CD8-positive, alpha-beta memory T cell (primary cell): ENCODE measurements at regions of chr16 and their contacts with region 1.

Region 1: DNA sequence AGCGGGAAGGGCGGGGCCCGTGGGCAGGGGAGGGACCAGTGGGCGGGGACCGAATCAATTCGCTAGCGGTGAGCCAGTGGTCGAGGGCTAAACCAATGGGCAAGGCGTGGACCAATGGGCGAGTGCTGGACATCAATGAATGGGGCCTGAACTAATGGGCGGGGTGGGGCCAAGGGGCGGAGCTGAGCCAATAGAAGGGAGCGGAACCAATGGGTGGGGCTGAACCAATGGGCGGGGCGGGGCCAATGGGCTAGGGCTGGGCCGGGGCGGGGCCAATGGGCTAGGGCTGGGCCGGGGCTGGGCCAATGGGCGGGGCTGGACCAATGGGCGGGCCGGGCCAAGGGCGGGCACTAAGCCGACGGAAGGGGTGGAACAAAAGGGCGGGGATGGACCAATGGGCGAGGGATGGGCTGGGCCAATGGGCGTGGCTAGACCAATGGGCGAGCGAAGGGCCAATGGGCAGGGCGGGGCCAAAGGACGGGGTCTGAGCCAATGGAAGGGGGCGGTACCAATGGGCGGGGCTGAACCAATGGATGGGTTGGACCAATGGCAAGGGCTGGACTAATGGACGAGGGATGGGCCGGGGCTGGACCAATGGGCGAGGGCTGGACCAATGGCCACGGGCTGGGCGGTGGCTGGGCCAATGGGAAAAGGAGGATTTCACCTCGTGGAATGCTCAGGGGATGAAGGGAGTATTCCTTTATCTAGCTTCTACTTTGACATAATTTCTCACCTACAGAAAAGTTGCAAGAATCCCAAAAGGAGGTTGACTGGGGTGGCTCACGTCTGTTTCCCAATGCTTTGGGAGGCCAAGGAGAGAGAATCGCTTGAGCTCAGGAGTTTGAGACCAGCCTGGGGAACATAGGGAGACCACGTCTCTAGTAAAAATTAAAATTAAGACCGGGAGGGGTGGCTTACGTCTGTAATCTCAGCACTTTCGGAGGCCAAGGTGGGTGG is 6.0 kb upstream of the FLYWCH1 start:
- DNase-seq: peak; percentile 84 to 89 (median 89)
- H3K4me3 ChIP-seq: peak overlapping the region; percentile 73
- H3K4me3 Mint-ChIP-seq: peak overlapping the region; percentile 88 to 96 (median 92)
- H3K27ac ChIP-seq: peak overlapping the region; percentile 74
- H3K27ac Mint-ChIP-seq: peak overlapping the region in 7 of 8 donors; percentile 72 to 88 (median 87)
- H3K4me1 ChIP-seq: peaks cover 10% of the 10 kb centered on the region
- H3K4me1 Mint-ChIP-seq: peaks cover 23 to 31% (median 26%) of the 10 kb centered on the region in 3 donors
- H3K27me3 ChIP-seq: no peaks in the 10 kb centered on the region
- H3K27me3 Mint-ChIP-seq: peaks cover 0 to 2% of the 10 kb centered on the region in 2 donors

Region 2: GRCh38 chr16:2703241-2703745 is 202.4 kb before region 1 on chr16:
- CTCF ChIA-PET with region 1: no interaction called
- POLR2A ChIA-PET with region 1: no interaction called
- DNase-seq: no peak
- H3K4me3 ChIP-seq: no peak overlapping the region
- H3K4me3 Mint-ChIP-seq: no peak overlapping the region
- H3K27ac ChIP-seq: no peak overlapping the region
- H3K27ac Mint-ChIP-seq: no peak overlapping the region
- H3K4me1 ChIP-seq: no peaks in the 10 kb centered on the region
- H3K4me1 Mint-ChIP-seq: no peaks in the 10 kb centered on the region
- H3K27me3 ChIP-seq: no peaks in the 10 kb centered on the region
- H3K27me3 Mint-ChIP-seq: no peaks in the 10 kb centered on the region

Region 3: GRCh38 chr16:2874912-2875362 is 30.8 kb before region 1 on chr16:
- CTCF ChIA-PET with region 1: interaction called, 10 read pairs
- POLR2A ChIA-PET with region 1: no interaction called
- DNase-seq: peak; percentile 50 to 77 (median 60)
- H3K4me3 ChIP-seq: no peak overlapping the region
- H3K4me3 Mint-ChIP-seq: peak overlapping the region in 1 of 7 donors; percentile 50
- H3K27ac ChIP-seq: no peak overlapping the region
- H3K27ac Mint-ChIP-seq: no peak overlapping the region
- H3K4me1 ChIP-seq: no peaks in the 10 kb centered on the region
- H3K4me1 Mint-ChIP-seq: peaks cover 0 to 6% (median 5%) of the 10 kb centered on the region in 3 donors
- H3K27me3 ChIP-seq: no peaks in the 10 kb centered on the region
- H3K27me3 Mint-ChIP-seq: peaks cover 0 to 3% of the 10 kb centered on the region in 2 donors

Region 4: GRCh38 chr16:2883027-2883851 is 22.5 kb before region 1 on chr16 and contains the start of gene FLYWCH2:
- CTCF ChIA-PET with region 1: interaction called, 10 read pairs
- POLR2A ChIA-PET with region 1: interaction called, 33 read pairs
- DNase-seq: peak; percentile 98 to 100 (median 100)
- H3K4me3 ChIP-seq: peak within 1 kb of the TSS; percentile 91
- H3K4me3 Mint-ChIP-seq: peak within 1 kb of the TSS; percentile 85 to 96 (median 93)
- H3K27ac ChIP-seq: peak within 1 kb of the TSS; percentile 88
- H3K27ac Mint-ChIP-seq: peak within 1 kb of the TSS; percentile 87 to 99 (median 97)
- H3K4me1 ChIP-seq: peaks cover 7% of the 10 kb centered on the region
- H3K4me1 Mint-ChIP-seq: peaks cover 11 to 21% (median 14%) of the 10 kb centered on the region in 3 donors
- H3K27me3 ChIP-seq: no peaks in the 10 kb centered on the region
- H3K27me3 Mint-ChIP-seq: no peaks in the 10 kb centered on the region
- total RNA-seq, gene FLYWCH2: 24.7 to 27.2 TPM

Region 5: DNA sequence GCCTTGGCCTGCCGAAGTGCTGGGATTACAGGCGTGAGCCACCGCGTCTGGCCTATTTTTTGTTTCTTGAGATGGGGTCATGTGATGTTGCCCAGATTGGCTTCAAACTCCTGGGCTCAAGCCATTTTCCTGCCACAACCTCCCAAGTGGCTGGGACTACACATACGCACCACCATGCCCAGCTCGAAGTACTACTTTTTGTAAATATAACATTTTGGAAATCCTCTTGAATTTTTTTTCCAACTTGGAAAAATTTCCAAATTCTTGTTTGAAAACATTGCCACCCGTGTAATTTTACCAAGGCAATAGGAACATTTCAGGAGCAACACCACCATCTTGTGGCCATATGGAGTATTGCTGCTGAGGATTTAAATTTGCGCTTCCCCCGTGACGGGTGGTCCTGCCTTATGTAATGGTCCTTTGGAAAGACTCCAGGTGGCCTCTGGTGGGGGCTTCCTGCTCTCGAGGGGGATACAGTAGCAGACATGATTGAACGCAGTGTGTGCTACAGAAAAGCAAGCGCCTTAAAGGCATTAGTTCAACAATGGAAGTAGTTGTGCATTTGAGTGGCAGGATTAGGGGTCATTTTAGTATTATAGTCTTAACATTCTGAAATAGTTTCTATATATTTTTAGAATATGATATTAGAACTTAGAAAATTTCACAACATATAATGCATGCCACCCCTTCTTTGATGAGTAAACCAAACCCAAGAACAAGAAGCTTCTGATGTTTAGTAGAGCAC is 14.0 kb after region 1 on chr16:
- CTCF ChIA-PET with region 1: interaction called, 13 read pairs
- POLR2A ChIA-PET with region 1: interaction called, 4 read pairs
- DNase-seq: peak in 4 of 5 donors; percentile 56 to 75 (median 62)
- H3K4me3 ChIP-seq: no peak overlapping the region
- H3K4me3 Mint-ChIP-seq: peak overlapping the region in 1 of 7 donors; percentile 11
- H3K27ac ChIP-seq: no peak overlapping the region
- H3K27ac Mint-ChIP-seq: peak overlapping the region in 5 of 8 donors; percentile 16 to 90 (median 87)
- H3K4me1 ChIP-seq: no peaks in the 10 kb centered on the region
- H3K4me1 Mint-ChIP-seq: peaks cover 3 to 6% (median 4%) of the 10 kb centered on the region in 3 donors
- H3K27me3 ChIP-seq: no peaks in the 10 kb centered on the region
- H3K27me3 Mint-ChIP-seq: peaks cover 0 to 1% of the 10 kb centered on the region in 2 donors

Region 6: GRCh38 chr16:2926650-2927646 is 21.2 kb after region 1 on chr16:
- CTCF ChIA-PET with region 1: interaction called, 13 read pairs
- POLR2A ChIA-PET with region 1: no interaction called
- DNase-seq: peak; percentile 75 to 92 (median 82)
- H3K4me3 ChIP-seq: no peak overlapping the region
- H3K4me3 Mint-ChIP-seq: peak overlapping the region in 5 of 7 donors; percentile 2 to 33 (median 20)
- H3K27ac ChIP-seq: no peak overlapping the region
- H3K27ac Mint-ChIP-seq: peak overlapping the region; percentile 0 to 73 (median 26)
- H3K4me1 ChIP-seq: peaks cover 8% of the 10 kb centered on the region
- H3K4me1 Mint-ChIP-seq: peaks cover 12 to 14% (median 14%) of the 10 kb centered on the region in 3 donors
- H3K27me3 ChIP-seq: no peaks in the 10 kb centered on the region
- H3K27me3 Mint-ChIP-seq: peaks cover 0 to under 1% of the 10 kb centered on the region in 2 donors

Region 7: DNA sequence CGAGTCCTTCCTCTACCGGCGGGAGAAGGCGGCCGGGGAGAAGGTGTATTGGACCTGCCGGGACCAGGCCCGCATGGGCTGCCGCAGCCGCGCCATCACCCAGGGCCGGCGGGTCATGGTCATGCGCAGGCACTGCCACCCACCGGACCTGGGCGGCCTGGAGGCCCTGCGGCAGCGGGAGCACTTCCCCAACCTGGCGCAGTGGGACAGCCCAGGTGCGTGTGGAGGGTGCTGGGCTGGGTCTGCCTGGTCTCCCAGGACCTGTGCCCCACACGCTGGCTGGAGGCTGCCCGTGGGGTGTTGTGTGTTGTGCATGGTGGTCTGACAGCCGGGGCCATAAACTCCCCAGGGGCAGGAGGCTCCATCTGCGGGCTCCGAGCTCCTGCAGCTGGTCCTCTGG is 31.5 kb after region 1 on chr16:
- CTCF ChIA-PET with region 1: no interaction called
- POLR2A ChIA-PET with region 1: no interaction called
- DNase-seq: no peak
- H3K4me3 ChIP-seq: no peak overlapping the region
- H3K4me3 Mint-ChIP-seq: no peak overlapping the region
- H3K27ac ChIP-seq: no peak overlapping the region
- H3K27ac Mint-ChIP-seq: no peak overlapping the region
- H3K4me1 ChIP-seq: no peaks in the 10 kb centered on the region
- H3K4me1 Mint-ChIP-seq: no peaks in the 10 kb centered on the region
- H3K27me3 ChIP-seq: no peaks in the 10 kb centered on the region
- H3K27me3 Mint-ChIP-seq: no peaks in the 10 kb centered on the region

Region 8: GRCh38 chr16:3012828-3013420 is 107.2 kb after region 1 on chr16 and contains the start of gene CLDN9:
- CTCF ChIA-PET with region 1: no interaction called
- POLR2A ChIA-PET with region 1: no interaction called
- DNase-seq: no peak
- H3K4me3 ChIP-seq: no peak within 1 kb of the TSS
- H3K4me3 Mint-ChIP-seq: peak within 1 kb of the TSS in 1 of 7 donors; percentile 4
- H3K27ac ChIP-seq: no peak within 1 kb of the TSS
- H3K27ac Mint-ChIP-seq: no peak within 1 kb of the TSS
- H3K4me1 ChIP-seq: peaks cover 13% of the 10 kb centered on the region
- H3K4me1 Mint-ChIP-seq: peaks cover 10 to 19% (median 10%) of the 10 kb centered on the region in 3 donors
- H3K27me3 ChIP-seq: peaks cover 3% of the 10 kb centered on the region
- H3K27me3 Mint-ChIP-seq: peaks cover 0 to 16% of the 10 kb centered on the region in 2 donors
- total RNA-seq, gene CLDN9: not detected